ENCODE measurements at regions of chr1 and their contacts with region 1.

Region 1: DNA sequence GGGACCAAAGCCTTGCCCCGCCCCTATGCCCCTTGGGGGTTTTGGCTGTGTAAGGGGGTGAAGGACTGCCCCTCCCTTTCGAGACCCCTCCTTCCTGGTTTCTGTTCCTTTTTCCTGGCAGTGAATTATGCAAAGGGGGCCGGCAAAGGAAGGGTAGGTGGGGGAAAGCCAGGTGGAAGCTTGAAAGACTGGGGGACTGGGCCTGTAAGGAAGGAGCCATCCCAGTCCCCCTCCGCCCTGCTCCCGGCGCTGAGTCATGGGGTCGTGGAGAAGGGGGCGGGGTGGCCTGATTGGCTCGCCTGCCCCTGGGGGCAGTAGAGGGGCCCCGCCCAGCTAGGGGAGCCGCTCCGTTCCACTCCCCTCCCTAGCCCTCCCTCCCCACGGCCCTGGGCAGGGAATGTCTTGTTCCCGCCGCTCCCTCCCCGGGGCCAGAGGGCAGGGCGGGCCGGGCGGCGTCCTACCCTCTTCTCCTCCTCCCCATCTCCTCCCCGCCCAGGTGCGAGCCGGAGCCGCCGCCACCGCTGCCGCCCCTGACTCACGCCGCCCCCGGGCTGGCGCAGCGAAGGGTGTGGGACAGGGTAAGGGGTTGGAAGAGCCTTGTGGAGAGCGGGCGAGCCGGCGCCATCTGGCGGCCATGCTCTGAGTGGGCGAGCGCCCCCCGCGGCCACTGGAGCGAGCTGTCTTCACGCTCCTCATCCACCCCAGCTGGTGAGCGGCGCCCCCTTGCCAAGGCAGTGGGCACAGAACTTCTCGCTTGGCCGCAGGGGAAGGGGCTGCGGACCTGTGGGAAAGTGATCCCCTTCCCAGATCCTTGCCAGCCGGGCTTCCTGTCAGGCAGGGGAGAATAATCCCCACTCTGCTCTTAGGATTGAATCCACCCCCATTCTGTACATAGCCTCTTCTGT is 14.7 kb downstream of the ZBTB7B start:
- DNase-seq: peak; percentile 93
- ATAC-seq: peak; percentile 88
- H3K4me3 Mint-ChIP-seq: peak overlapping the region; percentile 62
- H3K27ac Mint-ChIP-seq: peak overlapping the region; percentile 70
- H3K4me1 Mint-ChIP-seq: peaks cover 46% of the 10 kb centered on the region
- H3K27me3 Mint-ChIP-seq: peaks cover 4% of the 10 kb centered on the region; the same call in 1 of the 2 replicates
- CTCF ChIP-seq: peak; percentile 84

Region 2: DNA sequence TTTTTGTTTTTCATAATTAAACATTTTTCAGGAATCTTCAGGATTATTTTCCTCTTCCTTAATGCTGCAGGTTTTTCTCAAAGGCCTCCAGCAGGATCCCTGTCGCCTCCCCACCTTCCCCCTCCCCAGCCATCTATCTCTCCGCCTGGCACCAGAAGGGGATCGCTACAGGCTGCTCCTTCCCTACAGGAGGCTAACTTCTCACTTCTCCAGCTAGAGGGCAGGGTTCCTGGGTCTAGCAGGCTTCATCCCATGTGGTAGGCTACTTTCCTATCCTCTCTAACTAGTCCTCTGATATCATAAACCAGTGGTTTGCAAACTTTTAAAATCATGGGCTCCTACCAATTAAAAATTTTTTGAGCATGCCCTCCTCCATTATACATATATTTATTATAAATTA is 251.3 kb before region 1 on chr1:
- CTCF ChIA-PET with region 1: no interaction called
- POLR2A ChIA-PET with region 1: no interaction called
- DNase-seq: peak; percentile 59
- ATAC-seq: peak; percentile 97
- H3K4me3 Mint-ChIP-seq: no peak overlapping the region
- H3K27ac Mint-ChIP-seq: no peak overlapping the region
- H3K4me1 Mint-ChIP-seq: no peaks in the 10 kb centered on the region
- H3K27me3 Mint-ChIP-seq: peaks cover 4% of the 10 kb centered on the region
- CTCF ChIP-seq: no peak

Region 3: GRCh38 chr1:154955718-154956543 is 61.4 kb before region 1 on chr1 and contains the start of gene PBXIP1:
- CTCF ChIA-PET with region 1: interaction called, 11 read pairs
- POLR2A ChIA-PET with region 1: no interaction called
- DNase-seq: peak; percentile 85
- ATAC-seq: peak; percentile 87
- H3K4me3 Mint-ChIP-seq: peak within 1 kb of the TSS; percentile 97
- H3K27ac Mint-ChIP-seq: peak within 1 kb of the TSS; percentile 99
- H3K4me1 Mint-ChIP-seq: peaks cover 53% of the 10 kb centered on the region
- H3K27me3 Mint-ChIP-seq: no peaks in the 10 kb centered on the region
- CTCF ChIP-seq: no peak
- total RNA-seq, gene PBXIP1: 26.5 to 30.7 TPM (median 28.4 TPM) in 3 replicates

Region 4: DNA sequence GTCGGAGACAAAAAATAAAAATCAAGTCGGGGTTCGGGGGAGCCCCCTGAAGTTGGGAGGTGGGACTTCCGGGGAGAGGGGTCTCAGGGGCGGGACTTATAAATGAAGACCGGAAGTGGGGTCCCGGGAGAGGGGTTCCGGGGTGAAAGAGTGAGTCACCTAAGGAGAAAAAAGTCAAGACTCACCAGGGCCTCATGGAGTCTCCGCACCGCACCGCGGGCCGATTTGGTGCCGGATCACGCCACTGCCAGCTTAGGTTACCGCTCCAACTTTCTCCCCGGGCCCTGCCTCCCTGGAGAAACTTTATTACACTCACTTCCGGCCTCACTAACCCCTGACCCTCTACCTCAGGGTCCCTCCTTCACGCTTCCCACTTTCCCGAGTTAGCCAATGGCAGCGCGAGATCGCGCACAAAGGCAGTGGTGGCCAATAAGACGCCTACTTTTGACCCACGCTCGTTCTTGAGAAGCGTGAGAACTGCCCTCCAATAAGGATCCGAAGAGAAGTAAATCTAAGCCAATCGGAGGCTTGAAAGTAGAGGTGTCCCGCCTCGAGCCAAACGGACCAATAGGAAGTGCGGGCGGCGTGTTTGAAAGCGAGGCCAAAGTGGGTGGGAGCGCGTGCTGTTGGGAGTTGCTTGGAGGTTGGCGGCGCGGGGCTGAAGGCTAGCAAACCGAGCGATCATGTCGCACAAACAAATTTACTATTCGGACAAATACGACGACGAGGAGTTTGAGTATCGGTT is 43.1 kb before region 1 on chr1 and contains the start of gene CKS1B:
- CTCF ChIA-PET with region 1: interaction called, 26 read pairs
- POLR2A ChIA-PET with region 1: interaction called, 14 read pairs
- DNase-seq: peak; percentile 96
- ATAC-seq: peak; percentile 62
- H3K4me3 Mint-ChIP-seq: no peak within 1 kb of the TSS
- H3K27ac Mint-ChIP-seq: no peak within 1 kb of the TSS
- H3K4me1 Mint-ChIP-seq: peaks cover 28% of the 10 kb centered on the region
- H3K27me3 Mint-ChIP-seq: no peaks in the 10 kb centered on the region
- CTCF ChIP-seq: no peak
- total RNA-seq, gene CKS1B: 258 to 301 TPM (median 278 TPM) in 3 replicates

Region 5: GRCh38 chr1:154992721-154993571 is 24.3 kb before region 1 on chr1:
- CTCF ChIA-PET with region 1: interaction called, 79 read pairs
- POLR2A ChIA-PET with region 1: interaction called, 22 read pairs
- DNase-seq: no peak
- ATAC-seq: peak; percentile 56
- H3K4me3 Mint-ChIP-seq: no peak overlapping the region
- H3K27ac Mint-ChIP-seq: peak overlapping the region; percentile 70
- H3K4me1 Mint-ChIP-seq: peaks cover 11% of the 10 kb centered on the region; the same call in 1 of the 2 replicates
- H3K27me3 Mint-ChIP-seq: no peaks in the 10 kb centered on the region; the same call in 1 of the 2 replicates
- CTCF ChIP-seq: no peak

Region 6: GRCh38 chr1:155038602-155039307 is 21.5 kb after region 1 on chr1:
- CTCF ChIA-PET with region 1: interaction called, 40 read pairs
- POLR2A ChIA-PET with region 1: interaction called, 4 read pairs
- DNase-seq: no peak
- ATAC-seq: no peak
- H3K4me3 Mint-ChIP-seq: no peak overlapping the region
- H3K27ac Mint-ChIP-seq: no peak overlapping the region
- H3K4me1 Mint-ChIP-seq: no peaks in the 10 kb centered on the region; the same call in 1 of the 2 replicates
- H3K27me3 Mint-ChIP-seq: peaks cover 10% of the 10 kb centered on the region
- CTCF ChIP-seq: no peak

Region 7: DNA sequence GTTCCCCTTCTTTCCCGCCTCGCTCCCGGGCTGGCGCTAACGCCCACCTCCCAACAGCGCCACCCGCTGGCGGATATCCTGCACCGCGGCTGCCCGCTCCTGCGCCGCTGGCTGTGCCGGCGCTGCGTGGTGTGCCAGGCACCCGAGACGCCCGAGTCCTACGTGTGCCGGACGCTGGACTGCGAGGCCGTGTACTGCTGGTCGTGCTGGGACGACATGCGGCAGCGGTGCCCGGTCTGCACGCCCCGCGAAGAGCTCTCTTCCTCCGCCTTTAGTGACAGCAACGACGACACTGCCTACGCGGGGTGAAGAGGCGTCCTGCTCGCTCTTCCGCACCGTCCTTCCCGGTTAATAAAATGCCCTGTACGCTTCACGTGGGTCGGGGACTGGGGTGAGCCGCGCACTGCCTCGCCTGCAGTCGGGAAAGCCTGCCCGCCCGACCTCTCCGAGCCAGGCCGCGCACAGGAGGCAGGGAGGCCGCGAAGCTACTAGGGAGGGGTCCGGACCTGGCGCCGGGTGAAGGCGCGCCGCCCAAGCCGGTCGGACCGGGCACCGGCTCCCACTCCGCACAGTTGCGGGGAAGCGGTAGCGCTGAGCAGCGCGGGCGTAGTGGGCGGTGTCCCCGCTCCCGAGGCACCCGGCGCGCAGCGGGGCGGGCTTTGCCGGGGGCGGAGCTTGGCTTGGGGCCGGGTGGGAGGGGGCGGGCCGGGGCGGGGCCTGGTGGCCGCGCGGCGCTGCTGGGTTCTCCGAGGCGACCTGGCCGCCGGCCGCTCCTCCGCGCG is 33.5 kb after region 1 on chr1 and contains the start of gene ADAM15:
- CTCF ChIA-PET with region 1: interaction called, 49 read pairs
- POLR2A ChIA-PET with region 1: interaction called, 4 read pairs
- DNase-seq: peak; percentile 92
- ATAC-seq: peak; percentile 72
- H3K4me3 Mint-ChIP-seq: peak within 1 kb of the TSS; percentile 82
- H3K27ac Mint-ChIP-seq: peak within 1 kb of the TSS; percentile 72; the same call in 1 of the 2 replicates
- H3K4me1 Mint-ChIP-seq: peaks cover 33% of the 10 kb centered on the region
- H3K27me3 Mint-ChIP-seq: peaks cover 20% of the 10 kb centered on the region
- CTCF ChIP-seq: peak; percentile 97
- total RNA-seq, gene ADAM15: 32.1 to 38.4 TPM (median 33.2 TPM) in 3 replicates